ENCODE measurements at regions of chr4 and their contacts with region 1.

Region 1: GRCh38 chr4:37389967-37390580 is 145.5 kb downstream of the NWD2 start:
- DNase-seq: no peak
- ATAC-seq: peak; percentile 84
- H3K4me3 ChIP-seq: no peak overlapping the region
- H3K27ac ChIP-seq: no peak overlapping the region
- H3K4me1 ChIP-seq: no peaks in the 10 kb centered on the region
- H3K27me3 ChIP-seq: no peaks in the 10 kb centered on the region
- CTCF ChIP-seq: peak; percentile 62 to 75 (median 70)
- EP300 ChIP-seq: no peak
- POLR2A ChIP-seq: no peak
- RAD21 ChIP-seq: peak; percentile 79

Region 2: DNA sequence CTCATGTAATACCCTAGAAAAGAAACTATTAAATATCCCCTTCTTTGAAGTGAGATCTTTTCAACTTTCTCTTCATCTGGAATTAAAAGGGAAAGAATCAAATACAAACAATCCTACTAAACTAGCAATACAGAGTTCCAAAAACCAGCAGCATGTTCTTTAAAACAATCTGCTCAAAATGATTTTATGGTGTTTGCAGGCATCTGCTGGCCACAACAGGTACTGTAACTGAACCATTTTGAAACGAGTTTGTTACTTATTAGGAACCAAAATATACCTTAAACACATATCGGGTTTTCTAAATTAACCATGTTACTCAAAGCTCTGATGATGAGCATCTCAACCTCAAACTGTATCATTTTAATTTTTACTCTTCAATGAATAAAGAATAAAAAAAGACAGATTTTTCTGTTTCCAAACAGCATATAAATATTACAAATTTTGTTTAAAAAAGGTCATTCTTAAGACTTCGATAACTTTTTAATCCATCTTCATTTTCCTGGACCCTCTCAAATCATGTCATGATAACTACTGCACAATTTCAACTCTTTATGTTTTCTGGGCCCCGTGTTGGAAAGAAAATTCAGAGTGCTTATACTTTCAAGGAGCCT is 1202.2 kb before region 1 on chr4:
- CTCF ChIA-PET with region 1: interaction called, 3 read pairs
- POLR2A ChIA-PET with region 1: no interaction called
- RAD21 ChIA-PET with region 1: no interaction called
- SMC1A ChIA-PET with region 1: no interaction called
- in situ Hi-C with region 1: loop called (anchors 25 kb)
- intact Hi-C with region 1: no loop called
- DNase-seq: no peak
- ATAC-seq: peak; percentile 27; the same call in 1 of the 3 replicates
- H3K4me3 ChIP-seq: no peak overlapping the region
- H3K27ac ChIP-seq: no peak overlapping the region
- H3K4me1 ChIP-seq: peaks cover 6% of the 10 kb centered on the region
- H3K27me3 ChIP-seq: no peaks in the 10 kb centered on the region
- CTCF ChIP-seq: peak; percentile 54 to 70 (median 65)
- EP300 ChIP-seq: no peak
- POLR2A ChIP-seq: no peak
- RAD21 ChIP-seq: peak; percentile 70

Region 3: DNA sequence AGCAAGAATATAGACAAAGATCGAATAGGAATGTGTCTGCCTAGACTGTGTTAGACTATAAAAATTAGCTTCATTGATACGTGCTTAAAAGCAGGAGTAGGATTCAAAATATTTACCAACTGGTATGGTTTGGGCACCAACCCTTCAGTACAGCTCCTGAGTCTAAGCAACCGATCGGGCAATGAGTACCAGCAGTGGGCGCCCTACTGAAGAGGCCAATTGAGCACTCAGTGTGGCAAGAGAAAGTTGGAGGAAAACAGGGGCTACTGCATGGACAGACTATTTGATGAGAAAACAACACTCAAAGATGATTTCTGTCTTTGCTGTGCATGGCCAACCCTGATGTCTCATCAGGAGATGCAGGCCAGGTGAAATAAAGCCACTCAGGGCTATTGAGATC is 321.5 kb before region 1 on chr4:
- CTCF ChIA-PET with region 1: interaction called, 5 read pairs
- POLR2A ChIA-PET with region 1: no interaction called
- RAD21 ChIA-PET with region 1: interaction called, 3 read pairs
- SMC1A ChIA-PET with region 1: no interaction called
- in situ Hi-C with region 1: no loop called
- intact Hi-C with region 1: loop called (anchors 10 kb)
- DNase-seq: no peak
- ATAC-seq: no peak; the same call in 2 of the 3 replicates
- H3K4me3 ChIP-seq: no peak overlapping the region
- H3K27ac ChIP-seq: no peak overlapping the region
- H3K4me1 ChIP-seq: no peaks in the 10 kb centered on the region
- H3K27me3 ChIP-seq: no peaks in the 10 kb centered on the region
- CTCF ChIP-seq: peak; percentile 13 to 42 (median 17); a peak in 3 of 6 replicates
- EP300 ChIP-seq: no peak
- POLR2A ChIP-seq: no peak
- RAD21 ChIP-seq: no peak

Region 4: GRCh38 chr4:37400241-37400881 is 10.3 kb after region 1 on chr4:
- CTCF ChIA-PET with region 1: interaction called, 12 read pairs
- POLR2A ChIA-PET with region 1: no interaction called
- RAD21 ChIA-PET with region 1: interaction called, 7 read pairs
- SMC1A ChIA-PET with region 1: interaction called, 11 read pairs
- in situ Hi-C with region 1: no loop called
- intact Hi-C with region 1: no loop called
- DNase-seq: peak; percentile 53
- ATAC-seq: peak; percentile 86
- H3K4me3 ChIP-seq: no peak overlapping the region
- H3K27ac ChIP-seq: peak overlapping the region; percentile 64
- H3K4me1 ChIP-seq: peaks cover 20% of the 10 kb centered on the region
- H3K27me3 ChIP-seq: no peaks in the 10 kb centered on the region
- CTCF ChIP-seq: no peak
- EP300 ChIP-seq: peak; percentile 85 to 87
- POLR2A ChIP-seq: no peak
- RAD21 ChIP-seq: no peak

Region 5: GRCh38 chr4:37533286-37534033 is 143.4 kb after region 1 on chr4:
- CTCF ChIA-PET with region 1: no interaction called
- POLR2A ChIA-PET with region 1: no interaction called
- RAD21 ChIA-PET with region 1: no interaction called
- SMC1A ChIA-PET with region 1: no interaction called
- in situ Hi-C with region 1: no loop called
- intact Hi-C with region 1: no loop called
- DNase-seq: no peak
- ATAC-seq: no peak
- H3K4me3 ChIP-seq: no peak overlapping the region
- H3K27ac ChIP-seq: no peak overlapping the region
- H3K4me1 ChIP-seq: no peaks in the 10 kb centered on the region
- H3K27me3 ChIP-seq: no peaks in the 10 kb centered on the region
- CTCF ChIP-seq: no peak
- EP300 ChIP-seq: no peak
- POLR2A ChIP-seq: no peak
- RAD21 ChIP-seq: no peak